Keratinocyte (primary cell): ENCODE measurements at regions of chr9 and their contacts with region 1.

Region 1: GRCh38 chr9:99127376-99128132 is 22.6 kb downstream of the TGFBR1 start:
- DNase-seq: peak; percentile 85
- H3K4me3 ChIP-seq: peak overlapping the region in 1 of 3 experiments; percentile 3
- H3K27ac ChIP-seq: peak overlapping the region; percentile 88
- H3K4me1 ChIP-seq: peaks cover 55% of the 10 kb centered on the region
- H3K27me3 ChIP-seq: no peaks in the 10 kb centered on the region
- CTCF ChIP-seq: no peak

Region 2: DNA sequence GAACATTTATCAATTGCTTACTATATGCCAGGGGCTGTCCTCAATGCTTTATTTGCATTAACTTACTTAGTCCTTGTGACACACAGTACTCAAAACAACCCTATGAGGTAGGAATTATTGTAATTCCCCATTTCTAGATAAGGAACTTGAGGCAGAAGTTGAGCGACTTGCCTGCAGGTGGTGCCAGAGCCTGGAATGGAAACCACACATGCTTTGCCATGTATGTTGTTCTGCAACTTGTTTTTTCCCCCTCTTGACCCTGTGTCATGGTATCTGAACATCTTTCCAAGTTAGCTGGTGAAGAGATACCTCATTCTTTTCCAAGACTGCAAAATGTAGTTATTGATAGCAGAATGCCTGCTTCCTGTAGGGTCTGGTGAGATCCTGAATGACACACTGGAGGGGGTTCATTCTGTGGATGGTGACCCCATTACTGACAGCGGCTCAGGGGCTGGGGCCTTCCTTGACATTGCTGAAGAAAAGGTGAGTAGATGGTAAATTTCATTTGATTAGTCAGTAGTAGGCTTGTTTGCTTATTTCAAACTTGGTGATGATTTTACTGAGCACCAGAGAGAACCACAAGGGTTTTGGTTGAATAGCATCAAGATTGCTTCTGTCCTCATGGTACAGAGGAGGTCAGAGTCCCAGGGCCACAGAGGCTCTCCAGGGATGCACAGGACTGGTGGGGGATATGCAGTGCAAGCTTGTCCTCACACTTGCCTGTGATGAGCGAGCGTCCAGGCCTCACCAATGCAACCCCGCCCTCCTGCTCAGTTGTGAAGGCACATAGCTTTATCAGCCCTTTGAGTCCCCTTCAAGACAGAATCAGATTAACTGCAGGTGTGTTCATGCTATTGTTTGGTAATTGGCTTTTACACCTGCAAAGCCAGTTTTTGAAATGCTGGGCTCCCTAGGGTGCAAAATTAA is 126.8 kb before region 1 on chr9:
- dilution Hi-C with region 1: loop called (anchors 10 kb)
- DNase-seq: peak; percentile 28
- H3K4me3 ChIP-seq: no peak overlapping the region
- H3K27ac ChIP-seq: no peak overlapping the region
- H3K4me1 ChIP-seq: no peaks in the 10 kb centered on the region
- H3K27me3 ChIP-seq: peaks cover 28% of the 10 kb centered on the region
- CTCF ChIP-seq: peak; percentile 78 to 83 (median 82)